Activated CD4-positive, alpha-beta T cell treated with anti-CD3 and anti-CD28 coated beads for 36 hours (primary cell): ENCODE measurements at regions of chr11 and their contacts with region 1.

Region 1: GRCh38 chr11:46295312-46296058 is 18.0 kb downstream of the CREB3L1 start:
- DNase-seq: peak; percentile 82
- ATAC-seq: peak; percentile 93
- H3K4me3 Mint-ChIP-seq: peak overlapping the region; percentile 72
- H3K27ac Mint-ChIP-seq: no peak overlapping the region
- H3K4me1 Mint-ChIP-seq: peaks cover 12% of the 10 kb centered on the region
- H3K27me3 Mint-ChIP-seq: peaks cover 10% of the 10 kb centered on the region

Region 2: GRCh38 chr11:46127150-46127638 is 168.3 kb before region 1 on chr11:
- CTCF ChIA-PET with region 1: no interaction called
- POLR2A ChIA-PET with region 1: no interaction called
- intact Hi-C with region 1: loop called in 1 of 2 experiments (anchors 5 kb)
- DNase-seq: peak; percentile 66
- ATAC-seq: peak; percentile 96
- H3K4me3 Mint-ChIP-seq: no peak overlapping the region
- H3K27ac Mint-ChIP-seq: peak overlapping the region; percentile 17
- H3K4me1 Mint-ChIP-seq: peaks cover 28% of the 10 kb centered on the region
- H3K27me3 Mint-ChIP-seq: no peaks in the 10 kb centered on the region

Region 3: GRCh38 chr11:46278387-46279125 is 16.9 kb before region 1 on chr11:
- CTCF ChIA-PET with region 1: interaction called, 11 read pairs
- POLR2A ChIA-PET with region 1: no interaction called
- intact Hi-C with region 1: no loop called
- DNase-seq: peak; percentile 73
- ATAC-seq: peak; percentile 66
- H3K4me3 Mint-ChIP-seq: no peak overlapping the region
- H3K27ac Mint-ChIP-seq: no peak overlapping the region
- H3K4me1 Mint-ChIP-seq: peaks cover 3% of the 10 kb centered on the region
- H3K27me3 Mint-ChIP-seq: peaks cover 22% of the 10 kb centered on the region

Region 4: GRCh38 chr11:46308631-46309419 is 13.3 kb after region 1 on chr11:
- CTCF ChIA-PET with region 1: interaction called, 23 read pairs
- POLR2A ChIA-PET with region 1: no interaction called
- intact Hi-C with region 1: no loop called
- DNase-seq: peak; percentile 85
- ATAC-seq: peak; percentile 86
- H3K4me3 Mint-ChIP-seq: no peak overlapping the region
- H3K27ac Mint-ChIP-seq: no peak overlapping the region
- H3K4me1 Mint-ChIP-seq: peaks cover 5% of the 10 kb centered on the region
- H3K27me3 Mint-ChIP-seq: no peaks in the 10 kb centered on the region

Region 5: DNA sequence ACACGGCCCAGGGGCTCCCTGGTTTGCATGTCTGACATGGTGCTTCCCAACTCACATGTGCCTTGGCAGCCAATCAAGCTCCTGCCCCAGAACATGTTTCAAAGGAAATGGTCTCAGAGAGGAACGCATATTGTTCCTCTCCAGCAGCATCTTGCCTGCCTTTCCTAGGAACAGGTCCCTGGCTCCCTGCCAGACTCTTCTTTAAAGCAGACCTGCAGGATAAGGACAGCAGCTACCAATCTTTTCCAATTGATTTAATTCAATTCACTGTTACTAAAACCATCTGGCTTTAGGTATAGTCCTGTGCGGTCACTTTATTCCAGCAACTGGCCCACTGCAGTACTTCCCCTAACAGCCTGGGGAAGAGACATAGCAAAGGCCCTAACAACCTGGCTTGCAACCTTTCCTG is 218.5 kb after region 1 on chr11:
- CTCF ChIA-PET with region 1: no interaction called
- POLR2A ChIA-PET with region 1: no interaction called
- intact Hi-C with region 1: no loop called
- DNase-seq: no peak
- ATAC-seq: no peak
- H3K4me3 Mint-ChIP-seq: no peak overlapping the region
- H3K27ac Mint-ChIP-seq: peak overlapping the region; percentile 64
- H3K4me1 Mint-ChIP-seq: peaks cover 2% of the 10 kb centered on the region
- H3K27me3 Mint-ChIP-seq: no peaks in the 10 kb centered on the region